Naive thymus-derived CD4-positive, alpha-beta T cell (primary cell): ENCODE measurements at regions of chr12 and their contacts with region 1.

Region 1: DNA sequence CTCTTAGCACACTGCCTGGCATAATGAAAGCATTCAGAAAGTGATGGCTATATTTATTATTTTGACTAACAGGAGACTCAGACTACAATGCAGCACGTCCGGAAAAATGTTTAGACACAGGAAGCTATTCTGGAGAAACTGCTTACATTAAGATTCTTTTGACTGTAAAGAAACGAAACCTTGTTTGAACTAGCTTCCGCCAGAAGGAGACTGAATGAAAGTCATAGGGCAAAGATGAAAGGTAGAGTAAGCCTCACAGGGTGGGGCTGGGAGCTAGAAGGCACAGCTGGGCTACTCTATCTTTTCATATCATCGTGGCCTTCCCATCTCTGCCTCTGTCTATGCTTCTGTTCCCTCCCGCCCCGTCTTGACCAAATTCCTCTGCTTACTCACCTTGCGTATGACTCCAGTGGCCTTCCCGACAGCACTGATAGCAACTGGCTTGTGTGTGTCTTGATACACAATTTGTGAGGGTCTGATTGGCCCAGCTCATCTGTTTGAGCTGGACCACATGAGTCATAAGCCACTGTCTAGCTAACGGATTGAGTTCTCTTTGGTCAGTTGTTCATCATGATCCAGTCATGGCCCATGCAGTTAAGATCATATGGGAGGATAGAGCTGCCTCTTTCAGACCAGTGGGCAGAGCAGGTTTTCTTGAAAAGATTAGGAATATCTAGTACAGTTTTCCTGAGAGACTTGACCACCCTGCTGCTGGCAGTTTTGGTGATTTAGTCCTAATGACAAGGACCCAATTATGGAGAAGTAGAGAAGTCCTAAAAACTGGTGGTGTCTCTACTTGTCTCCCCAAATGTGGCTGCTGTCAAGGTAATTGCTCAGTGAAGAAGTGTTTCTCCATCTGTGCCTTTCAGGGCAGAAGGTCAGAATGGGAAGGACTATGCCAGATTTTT is 151.5 kb upstream of the SLC38A2 start:
- DNase-seq: peak in 8 of 9 donors; percentile 53 to 76 (median 69)
- ATAC-seq: peak; percentile 95
- H3K4me3 ChIP-seq: peak overlapping the region; percentile 5
- H3K4me3 Mint-ChIP-seq: peak overlapping the region; percentile 68 to 84 (median 76)
- H3K27ac ChIP-seq: peak overlapping the region; percentile 48
- H3K27ac Mint-ChIP-seq: peak overlapping the region; percentile 83 to 97 (median 90)
- H3K4me1 ChIP-seq: peaks cover 7 to 19% of the 10 kb centered on the region in 2 donors
- H3K4me1 Mint-ChIP-seq: peaks cover 21 to 57% (median 44%) of the 10 kb centered on the region in 7 donors
- H3K27me3 ChIP-seq: no peaks in the 10 kb centered on the region
- H3K27me3 Mint-ChIP-seq: no peaks in the 10 kb centered on the region

Region 2: GRCh38 chr12:46020768-46021167 is 503.3 kb before region 1 on chr12:
- CTCF ChIA-PET with region 1: no interaction called
- POLR2A ChIA-PET with region 1: no interaction called
- intact Hi-C with region 1: no loop called
- DNase-seq: no peak
- ATAC-seq: no peak
- H3K4me3 ChIP-seq: no peak overlapping the region
- H3K4me3 Mint-ChIP-seq: no peak overlapping the region
- H3K27ac ChIP-seq: no peak overlapping the region
- H3K27ac Mint-ChIP-seq: no peak overlapping the region
- H3K4me1 ChIP-seq: no peaks in the 10 kb centered on the region
- H3K4me1 Mint-ChIP-seq: no peaks in the 10 kb centered on the region
- H3K27me3 ChIP-seq: no peaks in the 10 kb centered on the region
- H3K27me3 Mint-ChIP-seq: peaks cover 0 to 24% (median 8%) of the 10 kb centered on the region in 5 donors

Region 3: GRCh38 chr12:46217541-46218321 is 306.4 kb before region 1 on chr12:
- CTCF ChIA-PET with region 1: no interaction called
- POLR2A ChIA-PET with region 1: no interaction called
- intact Hi-C with region 1: loop called in 1 of 2 experiments (anchors 5 kb)
- DNase-seq: peak in 8 of 9 donors; percentile 58 to 87 (median 84)
- ATAC-seq: peak; percentile 54
- H3K4me3 ChIP-seq: peak overlapping the region; percentile 41
- H3K4me3 Mint-ChIP-seq: peak overlapping the region; percentile 74 to 89 (median 81)
- H3K27ac ChIP-seq: peak overlapping the region; percentile 78
- H3K27ac Mint-ChIP-seq: peak overlapping the region; percentile 89 to 100 (median 99)
- H3K4me1 ChIP-seq: peaks cover 95% of the 10 kb centered on the region in 2 donors
- H3K4me1 Mint-ChIP-seq: peaks cover 69 to 100% (median 98%) of the 10 kb centered on the region in 7 donors
- H3K27me3 ChIP-seq: no peaks in the 10 kb centered on the region
- H3K27me3 Mint-ChIP-seq: no peaks in the 10 kb centered on the region

Region 4: DNA sequence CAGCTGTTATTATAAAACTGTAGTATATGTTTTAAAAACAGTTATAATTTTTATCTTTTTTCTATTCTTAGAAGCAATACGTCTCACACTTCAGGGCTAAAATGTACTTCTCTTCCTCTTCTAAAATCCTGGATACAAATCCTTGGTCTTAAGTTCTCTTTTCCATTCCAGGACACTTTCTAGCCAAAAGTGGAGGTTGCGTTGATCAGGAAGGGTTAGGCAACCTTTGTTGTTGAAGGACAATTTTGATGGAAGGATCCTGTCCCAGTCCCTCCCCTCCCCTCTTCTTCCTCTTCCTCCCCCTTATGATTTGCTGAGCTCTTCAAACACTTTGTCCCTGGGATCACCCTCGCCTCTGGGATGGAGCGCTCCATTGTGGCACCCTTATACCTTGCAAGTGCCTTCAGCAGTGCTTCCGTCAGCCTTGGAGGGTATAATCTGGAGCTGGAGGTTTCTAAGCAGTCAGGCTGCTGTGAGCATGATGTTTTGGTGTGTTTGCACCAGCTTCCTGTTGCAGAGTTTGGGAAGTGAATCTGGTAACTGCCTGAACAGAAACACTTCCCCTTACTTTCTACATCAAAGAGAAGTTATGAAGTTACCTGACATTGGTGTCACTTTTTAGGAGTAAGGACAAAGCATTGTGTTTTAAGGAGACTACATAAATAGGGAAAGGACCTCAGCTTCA is 64.1 kb before region 1 on chr12:
- CTCF ChIA-PET with region 1: interaction called, 3 read pairs
- POLR2A ChIA-PET with region 1: interaction called, 5 read pairs
- intact Hi-C with region 1: loop called (anchors 1 to 5 kb)
- DNase-seq: peak in 4 of 9 donors; percentile 10 to 38 (median 26)
- ATAC-seq: peak; percentile 63
- H3K4me3 ChIP-seq: peak overlapping the region; percentile 47
- H3K4me3 Mint-ChIP-seq: peak overlapping the region; percentile 74 to 95 (median 88)
- H3K27ac ChIP-seq: peak overlapping the region; percentile 42
- H3K27ac Mint-ChIP-seq: peak overlapping the region; percentile 86 to 99 (median 96)
- H3K4me1 ChIP-seq: peaks cover 26 to 56% of the 10 kb centered on the region in 2 donors
- H3K4me1 Mint-ChIP-seq: peaks cover 45 to 67% (median 61%) of the 10 kb centered on the region in 7 donors
- H3K27me3 ChIP-seq: no peaks in the 10 kb centered on the region
- H3K27me3 Mint-ChIP-seq: no peaks in the 10 kb centered on the region

Region 5: GRCh38 chr12:46499901-46500300 is 24.2 kb before region 1 on chr12:
- CTCF ChIA-PET with region 1: no interaction called
- POLR2A ChIA-PET with region 1: no interaction called
- intact Hi-C with region 1: no loop called
- DNase-seq: no peak
- ATAC-seq: no peak
- H3K4me3 ChIP-seq: no peak overlapping the region
- H3K4me3 Mint-ChIP-seq: no peak overlapping the region
- H3K27ac ChIP-seq: no peak overlapping the region
- H3K27ac Mint-ChIP-seq: no peak overlapping the region
- H3K4me1 ChIP-seq: no peaks in the 10 kb centered on the region
- H3K4me1 Mint-ChIP-seq: peaks cover 0 to 9% (median 0%) of the 10 kb centered on the region in 7 donors
- H3K27me3 ChIP-seq: no peaks in the 10 kb centered on the region
- H3K27me3 Mint-ChIP-seq: no peaks in the 10 kb centered on the region

Region 6: DNA sequence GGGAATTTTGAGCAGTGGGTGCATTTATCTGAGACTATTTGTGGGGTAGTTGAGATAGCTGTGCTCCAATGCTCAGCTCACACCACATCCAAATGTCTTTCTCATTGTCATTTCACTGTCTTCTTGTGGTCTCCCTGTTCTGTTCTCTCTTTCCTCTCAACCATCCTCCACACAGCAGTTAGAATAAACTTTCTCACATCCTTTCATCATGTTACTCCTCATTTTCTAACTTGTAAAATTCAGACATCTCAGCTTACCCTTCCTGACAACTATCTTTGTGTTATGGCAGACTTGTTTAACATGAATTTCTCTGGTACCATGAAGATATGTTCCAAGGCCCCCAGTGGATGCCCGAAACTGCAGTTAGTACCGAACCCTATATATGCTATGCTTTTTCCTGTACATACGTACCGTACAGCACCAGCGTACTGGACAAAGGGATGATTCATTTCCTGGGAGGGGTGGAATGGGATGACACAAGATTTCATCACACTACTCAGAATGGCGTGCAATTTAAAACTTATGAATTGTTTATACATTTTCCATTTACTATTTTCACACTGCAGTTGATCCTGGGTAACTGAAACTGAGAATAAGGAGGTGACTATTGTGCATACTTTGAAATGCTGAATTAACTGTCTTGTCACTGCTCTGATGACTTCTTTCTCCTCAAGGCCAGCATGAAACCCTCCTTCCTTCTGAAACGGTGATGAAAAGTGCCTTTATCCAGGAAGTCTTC is 25.6 kb after region 1 on chr12:
- CTCF ChIA-PET with region 1: interaction called, 3 read pairs
- POLR2A ChIA-PET with region 1: interaction called, 4 read pairs
- intact Hi-C with region 1: loop called in 1 of 2 experiments (anchors 1 kb)
- DNase-seq: peak in 1 of 9 donors; percentile 53
- ATAC-seq: peak; percentile 75
- H3K4me3 ChIP-seq: no peak overlapping the region
- H3K4me3 Mint-ChIP-seq: peak overlapping the region; percentile 7 to 81 (median 39)
- H3K27ac ChIP-seq: no peak overlapping the region
- H3K27ac Mint-ChIP-seq: peak overlapping the region in 6 of 9 donors; percentile 1 to 93 (median 14)
- H3K4me1 ChIP-seq: peaks cover 11 to 24% of the 10 kb centered on the region in 2 donors
- H3K4me1 Mint-ChIP-seq: peaks cover 28 to 69% (median 45%) of the 10 kb centered on the region in 7 donors
- H3K27me3 ChIP-seq: no peaks in the 10 kb centered on the region
- H3K27me3 Mint-ChIP-seq: no peaks in the 10 kb centered on the region

Region 7: GRCh38 chr12:46608431-46609272 is 84.5 kb after region 1 on chr12:
- CTCF ChIA-PET with region 1: no interaction called
- POLR2A ChIA-PET with region 1: interaction called, 7 read pairs
- intact Hi-C with region 1: loop called in 1 of 2 experiments (anchors 2 kb)
- DNase-seq: no peak
- ATAC-seq: no peak
- H3K4me3 ChIP-seq: no peak overlapping the region
- H3K4me3 Mint-ChIP-seq: peak overlapping the region; percentile 66 to 86 (median 74)
- H3K27ac ChIP-seq: no peak overlapping the region
- H3K27ac Mint-ChIP-seq: peak overlapping the region; percentile 60 to 93 (median 83)
- H3K4me1 ChIP-seq: peaks cover 21 to 27% of the 10 kb centered on the region in 2 donors
- H3K4me1 Mint-ChIP-seq: peaks cover 27 to 61% (median 59%) of the 10 kb centered on the region in 7 donors
- H3K27me3 ChIP-seq: no peaks in the 10 kb centered on the region
- H3K27me3 Mint-ChIP-seq: no peaks in the 10 kb centered on the region